Astrocyte of the spinal cord (primary cell): ENCODE measurements at regions of chr5 and their contacts with region 1.

Region 1: DNA sequence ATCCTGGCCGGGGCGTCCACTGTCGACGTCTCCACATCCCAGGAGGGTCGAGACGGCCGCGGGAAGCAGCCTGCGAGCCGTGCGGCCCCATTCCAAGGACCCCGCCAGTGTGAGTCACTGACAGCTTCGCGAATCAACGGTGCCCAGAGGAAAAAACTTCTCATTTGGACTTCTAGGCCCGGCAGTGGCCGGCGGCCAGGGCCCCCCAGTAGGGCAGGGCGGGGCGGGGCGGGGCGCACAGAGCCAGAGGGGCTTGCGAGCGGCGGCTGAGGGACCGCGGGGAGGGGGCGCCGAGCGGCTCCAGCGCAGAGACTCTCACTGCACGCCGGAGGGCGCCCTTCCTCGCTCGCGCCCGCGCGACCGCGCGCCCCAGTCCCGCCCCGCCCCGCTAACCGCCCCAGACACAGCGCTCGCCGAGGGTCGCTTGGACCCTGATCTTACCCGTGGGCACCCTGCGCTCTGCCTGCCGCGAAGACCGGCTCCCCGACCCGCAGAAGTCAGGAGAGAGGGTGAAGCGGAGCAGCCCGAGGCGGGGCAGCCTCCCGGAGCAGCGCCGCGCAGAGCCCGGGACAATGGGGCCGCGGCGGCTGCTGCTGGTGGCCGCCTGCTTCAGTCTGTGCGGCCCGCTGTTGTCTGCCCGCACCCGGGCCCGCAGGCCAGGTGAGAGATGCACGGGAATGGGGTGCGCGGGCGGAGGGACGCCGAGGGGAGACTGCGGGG is at the start of gene F2R:
- DNase-seq: peak; percentile 88
- H3K4me3 ChIP-seq: peak within 1 kb of the TSS; percentile 97
- CTCF ChIP-seq: peak; percentile 53

Region 2: GRCh38 chr5:76500633-76501393 is 215.1 kb before region 1 on chr5:
- in situ Hi-C with region 1: no loop called
- DNase-seq: peak; percentile 27
- H3K4me3 ChIP-seq: no peak overlapping the region
- CTCF ChIP-seq: no peak

Region 3: GRCh38 chr5:76521240-76521758 is 194.6 kb before region 1 on chr5:
- in situ Hi-C with region 1: no loop called
- DNase-seq: peak; percentile 87
- H3K4me3 ChIP-seq: no peak overlapping the region
- CTCF ChIP-seq: no peak

Region 4: GRCh38 chr5:76601470-76601869 is 114.4 kb before region 1 on chr5:
- in situ Hi-C with region 1: loop called (anchors 25 kb)
- DNase-seq: peak; percentile 73
- H3K4me3 ChIP-seq: no peak overlapping the region
- CTCF ChIP-seq: peak; percentile 62